ENCODE measurements at regions of chr2 and their contacts with region 1.

Region 1: GRCh38 chr2:152036611-152037469 is 62.0 kb downstream of the CACNB4 start:
- DNase-seq: peak in 1 of 2 donors; percentile 71
- ATAC-seq: no peak
- H3K4me3 ChIP-seq: no peak overlapping the region
- H3K27ac ChIP-seq: no peak overlapping the region
- H3K4me1 ChIP-seq: no peaks in the 10 kb centered on the region
- H3K27me3 ChIP-seq: no peaks in the 10 kb centered on the region

Region 2: GRCh38 chr2:152012697-152013096 is 24.1 kb before region 1 on chr2:
- intact Hi-C with region 1: no loop called
- DNase-seq: no peak
- ATAC-seq: no peak
- H3K4me3 ChIP-seq: no peak overlapping the region
- H3K27ac ChIP-seq: no peak overlapping the region
- H3K4me1 ChIP-seq: no peaks in the 10 kb centered on the region
- H3K27me3 ChIP-seq: no peaks in the 10 kb centered on the region

Region 3: DNA sequence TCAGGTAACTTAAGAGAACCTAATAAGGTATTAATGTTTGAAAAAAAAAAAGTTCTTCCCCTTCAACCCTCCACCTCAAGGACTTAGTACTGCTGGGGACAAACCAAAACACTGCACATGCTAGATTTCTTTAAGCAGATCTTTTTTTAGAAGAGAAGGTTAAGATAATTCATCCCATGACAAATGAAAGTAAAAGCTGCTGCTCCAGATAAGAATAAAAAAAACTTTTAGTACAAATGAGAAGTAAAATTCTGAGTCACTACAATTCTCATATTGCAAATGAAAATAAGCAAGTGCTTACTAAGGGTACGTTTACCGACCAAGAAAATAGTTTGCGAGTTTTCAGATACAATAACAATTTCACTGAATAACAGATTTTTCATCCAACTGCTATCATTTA is 129.8 kb after region 1 on chr2:
- intact Hi-C with region 1: loop called in 1 of 2 experiments (anchors 10 kb)
- DNase-seq: no peak
- ATAC-seq: no peak
- H3K4me3 ChIP-seq: no peak overlapping the region
- H3K27ac ChIP-seq: no peak overlapping the region
- H3K4me1 ChIP-seq: peaks cover 0 to 9% of the 10 kb centered on the region in 2 donors
- H3K27me3 ChIP-seq: no peaks in the 10 kb centered on the region

Region 4: GRCh38 chr2:152175458-152176325 is 138.9 kb after region 1 on chr2 and contains the start of gene STAM2:
- intact Hi-C with region 1: loop called in 1 of 2 experiments (anchors 5 kb)
- DNase-seq: peak; percentile 96 to 98
- ATAC-seq: peak; percentile 99
- H3K4me3 ChIP-seq: peak within 1 kb of the TSS; percentile 82 to 98
- H3K27ac ChIP-seq: peak within 1 kb of the TSS; percentile 62 to 66
- H3K4me1 ChIP-seq: peaks cover 0 to 2% of the 10 kb centered on the region in 2 donors
- H3K27me3 ChIP-seq: no peaks in the 10 kb centered on the region
- total RNA-seq, gene STAM2: 46.2 to 46.8 TPM

Region 5: DNA sequence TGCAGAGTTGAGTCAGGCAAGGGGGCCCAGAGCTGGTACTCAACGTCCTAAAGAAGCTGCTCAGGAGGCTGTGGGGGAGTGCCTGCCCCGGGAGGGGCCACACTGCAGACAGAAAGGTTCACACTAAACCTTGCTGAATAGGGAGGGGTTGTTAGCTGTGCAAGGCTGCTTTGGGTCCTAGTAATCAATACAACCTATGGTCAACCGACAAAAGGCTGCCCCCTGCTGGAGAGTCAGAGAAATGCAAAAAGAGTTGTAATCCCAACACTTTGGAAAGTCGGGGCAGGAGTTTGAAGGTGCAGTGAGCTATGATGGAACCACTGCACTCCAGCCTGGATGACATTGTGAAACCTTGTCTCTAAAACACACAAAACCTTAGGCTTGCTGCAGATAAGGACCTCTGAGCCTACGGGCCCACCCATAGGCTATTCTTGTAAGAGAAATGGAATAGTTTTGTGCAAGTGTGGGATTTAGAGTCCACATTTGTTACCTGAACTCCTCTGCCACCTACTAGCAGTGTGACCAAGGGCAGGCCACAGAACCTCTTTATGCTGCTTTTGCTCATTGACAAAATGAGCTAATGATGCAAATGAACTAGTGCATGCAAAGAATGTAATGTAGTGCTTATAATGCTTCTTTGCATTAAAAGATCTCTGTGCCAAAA is 598.9 kb after region 1 on chr2:
- intact Hi-C with region 1: loop called (anchors 10 kb)
- DNase-seq: peak; percentile 64 to 77
- ATAC-seq: peak; percentile 76
- H3K4me3 ChIP-seq: no peak overlapping the region
- H3K27ac ChIP-seq: no peak overlapping the region
- H3K4me1 ChIP-seq: no peaks in the 10 kb centered on the region
- H3K27me3 ChIP-seq: no peaks in the 10 kb centered on the region

Measured in aorta (tissue), 5 donors.